HepG2 (cell line): ENCODE measurements at regions of chr22 and their contacts with region 1.

Region 1: GRCh38 chr22:23928187-23928586 is 32.8 kb downstream of the GSTT2B start:
- DNase-seq: no peak
- ATAC-seq: no peak; the same call in 2 of the 3 replicates
- H3K4me3 ChIP-seq: no peak overlapping the region
- H3K27ac ChIP-seq: no peak overlapping the region
- H3K4me1 ChIP-seq: peaks cover 1% of the 10 kb centered on the region; the same call in 1 of the 2 replicates
- H3K27me3 ChIP-seq: no peaks in the 10 kb centered on the region
- CTCF ChIP-seq: no peak
- EP300 ChIP-seq: no peak
- POLR2A ChIP-seq: no peak
- RAD21 ChIP-seq: no peak

Region 2: DNA sequence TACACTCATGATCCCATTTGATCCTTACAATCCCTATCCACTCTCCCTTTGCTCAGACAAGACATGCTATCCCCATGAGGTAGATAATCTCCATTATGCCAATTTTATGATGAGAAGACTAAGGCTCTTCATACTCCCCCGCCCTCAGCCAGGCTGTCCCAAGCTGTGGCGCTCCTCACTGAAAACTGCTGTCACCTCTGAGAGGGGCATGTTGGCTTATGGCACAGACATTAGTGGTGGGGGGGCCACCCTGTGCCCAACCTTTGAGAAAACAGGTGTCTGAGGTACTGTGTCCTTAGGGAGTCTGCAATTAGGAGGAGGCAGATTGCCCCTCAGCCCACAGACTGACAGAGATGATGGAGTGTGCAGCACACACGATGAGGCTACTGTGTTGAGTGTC is 40.9 kb after region 1 on chr22:
- CTCF ChIA-PET with region 1: no interaction called
- POLR2A ChIA-PET with region 1: no interaction called
- in situ Hi-C with region 1: loop called (anchors 5 kb)
- intact Hi-C with region 1: no loop called
- DNase-seq: no peak
- ATAC-seq: no peak
- H3K4me3 ChIP-seq: no peak overlapping the region
- H3K27ac ChIP-seq: no peak overlapping the region
- H3K4me1 ChIP-seq: no peaks in the 10 kb centered on the region
- H3K27me3 ChIP-seq: no peaks in the 10 kb centered on the region
- CTCF ChIP-seq: no peak
- EP300 ChIP-seq: no peak
- POLR2A ChIP-seq: peak in 1 of 2 experiments; percentile 29; a peak in 1 of 4 replicates
- RAD21 ChIP-seq: no peak